Pancreas (tissue), 10 donors: ENCODE measurements at regions of chr1 and their contacts with region 1.

Region 1: GRCh38 chr1:91924146-91924545 is 25.1 kb upstream of the BRDT start:
- DNase-seq: no peak
- ATAC-seq: no peak
- H3K4me3 ChIP-seq: no peak overlapping the region
- H3K27ac ChIP-seq: no peak overlapping the region
- H3K4me1 ChIP-seq: no peaks in the 10 kb centered on the region
- H3K27me3 ChIP-seq: no peaks in the 10 kb centered on the region
- CTCF ChIP-seq: no peak

Region 2: GRCh38 chr1:91511386-91511785 is 412.8 kb before region 1 on chr1:
- intact Hi-C with region 1: loop called (anchors 5 to 10 kb)
- DNase-seq: no peak
- ATAC-seq: peak in 3 of 4 donors; percentile 60 to 66 (median 63)
- H3K4me3 ChIP-seq: no peak overlapping the region
- H3K27ac ChIP-seq: no peak overlapping the region
- H3K4me1 ChIP-seq: no peaks in the 10 kb centered on the region
- H3K27me3 ChIP-seq: no peaks in the 10 kb centered on the region
- CTCF ChIP-seq: peak in 3 of 4 donors; percentile 31 to 50 (median 47)

Region 3: DNA sequence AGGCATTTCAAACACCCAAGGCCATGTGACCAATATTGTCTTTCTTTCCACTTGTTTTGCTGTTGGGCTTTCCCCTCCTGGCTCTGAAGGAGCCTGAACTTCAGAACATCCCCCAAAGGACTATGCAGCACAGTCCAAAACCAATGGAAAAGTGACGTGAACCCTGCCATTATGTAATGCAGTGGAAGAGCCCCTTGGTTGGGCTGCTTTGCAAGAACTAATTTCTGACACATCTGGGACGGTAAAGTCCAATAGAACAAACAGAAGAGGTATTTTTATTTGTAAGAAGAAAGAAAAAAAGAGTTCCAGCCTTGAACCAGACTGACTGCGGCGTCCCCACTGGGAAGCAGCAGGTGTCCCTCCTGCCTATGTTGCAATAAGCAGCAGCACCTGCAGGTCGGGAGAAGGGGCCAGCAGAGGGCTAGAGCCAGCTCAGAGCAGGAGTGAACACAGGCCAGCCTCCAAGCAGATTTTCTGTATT is 306.8 kb before region 1 on chr1:
- intact Hi-C with region 1: loop called in 1 of 3 experiments (anchors 10 kb)
- DNase-seq: peak; percentile 79 to 90 (median 82)
- ATAC-seq: peak; percentile 99 to 100 (median 100)
- H3K4me3 ChIP-seq: no peak overlapping the region
- H3K27ac ChIP-seq: peak overlapping the region in 1 of 4 donors; percentile 25
- H3K4me1 ChIP-seq: peaks cover 0 to 3% (median 0%) of the 10 kb centered on the region in 3 donors
- H3K27me3 ChIP-seq: no peaks in the 10 kb centered on the region
- CTCF ChIP-seq: peak in 3 of 4 donors; percentile 44 to 55 (median 47)

Region 4: DNA sequence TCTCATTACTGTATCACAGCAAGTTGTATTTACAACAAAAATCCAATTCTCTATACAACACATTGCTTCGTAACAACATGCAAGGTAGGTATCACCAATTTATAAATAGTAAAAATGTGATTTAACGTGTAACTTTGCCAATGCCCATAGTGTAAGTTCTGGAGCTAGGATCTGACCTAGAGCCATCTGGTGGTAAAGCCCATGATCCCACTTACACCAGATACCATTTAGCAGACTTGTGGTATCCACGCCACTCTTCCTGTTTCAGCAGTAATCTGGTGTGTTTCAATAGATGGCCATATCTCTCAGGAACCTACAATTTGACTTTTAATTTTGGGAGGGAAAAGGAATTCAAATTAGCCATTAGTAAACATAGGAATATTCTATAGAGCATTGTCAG is 140.9 kb after region 1 on chr1:
- intact Hi-C with region 1: no loop called
- DNase-seq: no peak
- ATAC-seq: no peak
- H3K4me3 ChIP-seq: no peak overlapping the region
- H3K27ac ChIP-seq: no peak overlapping the region
- H3K4me1 ChIP-seq: no peaks in the 10 kb centered on the region
- H3K27me3 ChIP-seq: no peaks in the 10 kb centered on the region
- CTCF ChIP-seq: no peak

Region 5: GRCh38 chr1:92108631-92109030 is 184.5 kb after region 1 on chr1:
- intact Hi-C with region 1: no loop called
- DNase-seq: no peak
- ATAC-seq: no peak
- H3K4me3 ChIP-seq: no peak overlapping the region
- H3K27ac ChIP-seq: no peak overlapping the region
- H3K4me1 ChIP-seq: no peaks in the 10 kb centered on the region
- H3K27me3 ChIP-seq: no peaks in the 10 kb centered on the region
- CTCF ChIP-seq: no peak